PC-9 (cell line): ENCODE measurements at regions of chr13 and their contacts with region 1.

Region 1: DNA sequence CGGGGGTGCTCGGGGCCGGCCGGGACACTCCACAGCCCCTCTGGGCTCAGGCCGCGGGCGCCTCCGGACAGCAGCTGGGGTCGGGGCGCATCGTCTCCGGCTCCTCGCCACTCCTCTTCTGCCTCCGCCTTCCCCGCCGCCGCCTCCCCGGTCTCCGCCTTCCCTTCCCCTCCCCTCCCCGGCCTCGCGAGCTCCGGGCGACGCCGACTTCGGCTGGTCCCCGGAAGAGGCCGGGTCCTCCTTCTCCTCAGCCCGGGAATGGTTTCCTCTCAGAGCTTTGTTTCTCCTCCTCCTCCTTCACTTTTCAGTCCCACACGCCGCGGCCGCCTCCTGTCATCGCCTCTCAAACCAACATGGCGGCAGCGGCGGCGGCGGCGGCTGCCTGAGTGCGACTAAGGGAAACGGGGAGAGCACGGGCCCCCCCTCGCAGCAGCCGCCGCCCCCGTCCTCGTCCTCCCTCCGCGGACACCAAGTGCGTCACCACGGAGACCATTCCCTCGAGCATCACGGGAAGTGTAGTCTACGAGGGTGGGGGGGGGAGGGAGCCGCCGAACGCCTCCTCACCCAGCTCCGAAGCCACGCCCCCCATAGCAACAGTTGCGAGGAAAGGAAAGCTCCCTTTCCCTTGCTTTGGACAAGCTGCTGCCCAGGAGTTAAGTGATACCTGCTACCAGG is at the start of gene UBL3:
- DNase-seq: peak; percentile 85 to 89
- H3K4me3 ChIP-seq: peak within 1 kb of the TSS; percentile 75
- H3K27ac ChIP-seq: peak within 1 kb of the TSS; percentile 91
- H3K4me1 ChIP-seq: peaks cover 42% of the 10 kb centered on the region
- H3K27me3 ChIP-seq: no peaks in the 10 kb centered on the region
- CTCF ChIP-seq: no peak
- total RNA-seq, gene UBL3: 22.1 and 24.4 TPM in 2 replicates

Region 2: DNA sequence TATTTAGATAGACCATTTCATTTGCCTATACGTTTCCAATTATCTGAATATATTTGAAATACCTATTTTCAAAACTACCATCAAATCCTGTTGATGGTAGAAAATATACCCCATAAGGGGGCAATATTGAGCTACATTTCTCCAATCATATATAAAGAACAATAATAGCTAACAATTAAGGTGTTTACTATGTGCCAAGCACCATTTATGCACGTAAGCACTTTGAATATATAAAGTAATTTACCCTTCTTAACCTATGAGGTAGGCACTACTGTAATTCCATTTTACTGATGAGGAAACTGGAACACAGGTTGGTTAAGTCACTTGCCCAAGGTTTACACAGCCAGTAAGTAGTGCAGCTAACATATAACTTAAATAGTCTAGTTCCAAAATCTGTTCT is 79.1 kb before region 1 on chr13:
- CTCF ChIA-PET with region 1: interaction called, 3 read pairs
- POLR2A ChIA-PET with region 1: no interaction called
- intact Hi-C with region 1: loop called (anchors 5 kb)
- DNase-seq: peak in 1 of 2 experiments; percentile 46
- H3K4me3 ChIP-seq: no peak overlapping the region
- H3K27ac ChIP-seq: no peak overlapping the region
- H3K4me1 ChIP-seq: no peaks in the 10 kb centered on the region
- H3K27me3 ChIP-seq: no peaks in the 10 kb centered on the region
- CTCF ChIP-seq: peak; percentile 78

Region 3: GRCh38 chr13:29782798-29783197 is 67.6 kb before region 1 on chr13:
- CTCF ChIA-PET with region 1: no interaction called
- POLR2A ChIA-PET with region 1: no interaction called
- intact Hi-C with region 1: no loop called
- DNase-seq: no peak
- H3K4me3 ChIP-seq: no peak overlapping the region
- H3K27ac ChIP-seq: no peak overlapping the region
- H3K4me1 ChIP-seq: peaks cover 8% of the 10 kb centered on the region; the same call in 1 of the 2 replicates
- H3K27me3 ChIP-seq: no peaks in the 10 kb centered on the region
- CTCF ChIP-seq: no peak

Region 4: DNA sequence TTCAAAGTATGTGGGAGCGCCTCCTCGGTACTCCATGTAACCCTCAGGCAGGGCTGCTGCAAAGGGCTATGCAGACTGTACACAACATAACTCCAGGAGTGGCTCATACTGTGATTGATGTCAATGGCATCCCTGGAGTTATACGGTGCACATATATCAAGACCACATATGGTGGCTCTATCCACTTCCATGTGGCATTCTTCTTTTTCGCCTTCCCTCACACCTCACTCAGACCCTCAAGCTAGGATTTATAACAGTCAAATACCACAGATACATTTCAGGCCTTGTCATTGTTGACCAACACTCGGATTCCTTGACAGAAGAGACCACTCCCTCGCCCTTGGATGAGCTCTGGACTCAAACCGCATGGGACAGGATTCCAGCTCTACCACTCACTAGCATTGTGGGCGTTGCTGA is 11.3 kb after region 1 on chr13:
- CTCF ChIA-PET with region 1: no interaction called
- POLR2A ChIA-PET with region 1: interaction called, 10 read pairs
- intact Hi-C with region 1: no loop called
- DNase-seq: peak; percentile 58 to 62
- H3K4me3 ChIP-seq: no peak overlapping the region
- H3K27ac ChIP-seq: no peak overlapping the region
- H3K4me1 ChIP-seq: no peaks in the 10 kb centered on the region
- H3K27me3 ChIP-seq: no peaks in the 10 kb centered on the region
- CTCF ChIP-seq: no peak

Region 5: GRCh38 chr13:29911781-29912418 is 61.5 kb after region 1 on chr13:
- CTCF ChIA-PET with region 1: no interaction called
- POLR2A ChIA-PET with region 1: interaction called, 15 read pairs
- intact Hi-C with region 1: no loop called
- DNase-seq: no peak
- H3K4me3 ChIP-seq: no peak overlapping the region
- H3K27ac ChIP-seq: no peak overlapping the region
- H3K4me1 ChIP-seq: peaks cover 25% of the 10 kb centered on the region
- H3K27me3 ChIP-seq: no peaks in the 10 kb centered on the region
- CTCF ChIP-seq: no peak

Region 6: GRCh38 chr13:29969286-29969685 is 118.9 kb after region 1 on chr13:
- CTCF ChIA-PET with region 1: no interaction called
- POLR2A ChIA-PET with region 1: interaction called, 20 read pairs
- intact Hi-C with region 1: no loop called
- DNase-seq: no peak
- H3K4me3 ChIP-seq: no peak overlapping the region
- H3K27ac ChIP-seq: no peak overlapping the region
- H3K4me1 ChIP-seq: no peaks in the 10 kb centered on the region
- H3K27me3 ChIP-seq: no peaks in the 10 kb centered on the region
- CTCF ChIP-seq: no peak

Region 7: GRCh38 chr13:30114571-30115256 is 264.4 kb after region 1 on chr13:
- CTCF ChIA-PET with region 1: interaction called, 3 read pairs
- POLR2A ChIA-PET with region 1: no interaction called
- intact Hi-C with region 1: loop called (anchors 1 kb)
- DNase-seq: peak; percentile 64 to 85
- H3K4me3 ChIP-seq: peak overlapping the region; percentile 64; the same call in 1 of the 2 replicates
- H3K27ac ChIP-seq: 0 out of 2 replicates have a peak overlapping the region, but pooled peaks have one; percentile 13
- H3K4me1 ChIP-seq: peaks cover 17% of the 10 kb centered on the region
- H3K27me3 ChIP-seq: no peaks in the 10 kb centered on the region
- CTCF ChIP-seq: peak; percentile 91

Region 8: DNA sequence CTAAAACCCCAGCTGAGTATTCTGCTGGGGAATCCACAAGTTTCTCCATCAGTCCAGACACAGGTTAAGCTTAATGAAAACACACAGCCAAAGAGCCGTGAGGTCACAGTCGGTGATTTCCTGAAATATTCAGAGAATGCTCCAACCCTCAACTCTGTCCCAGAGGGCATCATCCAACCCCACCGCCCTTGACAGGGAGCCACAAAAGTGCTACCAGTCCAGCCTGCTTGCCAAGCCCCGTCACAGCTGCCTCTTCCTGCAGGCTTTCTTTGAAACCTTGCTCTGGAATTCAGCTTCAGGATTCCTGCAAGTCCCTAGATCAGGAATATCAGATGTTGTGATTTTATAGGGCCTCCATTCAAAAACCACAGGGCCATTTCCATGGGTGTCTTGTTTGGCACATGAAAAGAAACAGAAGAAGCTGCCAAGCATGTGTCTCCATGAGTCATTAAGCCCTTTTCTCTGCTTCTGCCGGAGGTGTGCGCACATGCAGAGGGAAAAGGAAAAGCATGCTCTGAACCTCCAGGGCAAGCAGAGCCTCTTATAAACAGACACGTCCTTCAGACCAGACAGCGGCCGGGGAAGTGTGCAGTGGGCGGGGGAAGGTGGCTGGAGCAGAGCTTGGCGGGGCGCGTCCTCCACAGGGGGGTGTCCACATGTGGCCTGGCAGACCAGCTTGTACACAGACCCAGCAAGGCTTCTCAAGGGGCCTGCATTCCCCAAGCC is 292.3 kb after region 1 on chr13:
- CTCF ChIA-PET with region 1: no interaction called
- POLR2A ChIA-PET with region 1: no interaction called
- intact Hi-C with region 1: no loop called
- DNase-seq: peak; percentile 87 to 96
- H3K4me3 ChIP-seq: no peak overlapping the region; the same call in 1 of the 2 replicates
- H3K27ac ChIP-seq: peak overlapping the region; percentile 83
- H3K4me1 ChIP-seq: peaks cover 34% of the 10 kb centered on the region
- H3K27me3 ChIP-seq: no peaks in the 10 kb centered on the region
- CTCF ChIP-seq: no peak

Region 9: GRCh38 chr13:30382836-30383525 is 532.6 kb after region 1 on chr13:
- CTCF ChIA-PET with region 1: no interaction called
- POLR2A ChIA-PET with region 1: no interaction called
- intact Hi-C with region 1: no loop called
- DNase-seq: no peak
- H3K4me3 ChIP-seq: no peak overlapping the region
- H3K27ac ChIP-seq: no peak overlapping the region
- H3K4me1 ChIP-seq: no peaks in the 10 kb centered on the region
- H3K27me3 ChIP-seq: no peaks in the 10 kb centered on the region
- CTCF ChIP-seq: no peak